Activated CD4-positive, alpha-beta T cell treated with anti-CD3 and anti-CD28 coated beads for 36 hours (primary cell): ENCODE measurements at regions of chr6 and their contacts with region 1.

Region 1: DNA sequence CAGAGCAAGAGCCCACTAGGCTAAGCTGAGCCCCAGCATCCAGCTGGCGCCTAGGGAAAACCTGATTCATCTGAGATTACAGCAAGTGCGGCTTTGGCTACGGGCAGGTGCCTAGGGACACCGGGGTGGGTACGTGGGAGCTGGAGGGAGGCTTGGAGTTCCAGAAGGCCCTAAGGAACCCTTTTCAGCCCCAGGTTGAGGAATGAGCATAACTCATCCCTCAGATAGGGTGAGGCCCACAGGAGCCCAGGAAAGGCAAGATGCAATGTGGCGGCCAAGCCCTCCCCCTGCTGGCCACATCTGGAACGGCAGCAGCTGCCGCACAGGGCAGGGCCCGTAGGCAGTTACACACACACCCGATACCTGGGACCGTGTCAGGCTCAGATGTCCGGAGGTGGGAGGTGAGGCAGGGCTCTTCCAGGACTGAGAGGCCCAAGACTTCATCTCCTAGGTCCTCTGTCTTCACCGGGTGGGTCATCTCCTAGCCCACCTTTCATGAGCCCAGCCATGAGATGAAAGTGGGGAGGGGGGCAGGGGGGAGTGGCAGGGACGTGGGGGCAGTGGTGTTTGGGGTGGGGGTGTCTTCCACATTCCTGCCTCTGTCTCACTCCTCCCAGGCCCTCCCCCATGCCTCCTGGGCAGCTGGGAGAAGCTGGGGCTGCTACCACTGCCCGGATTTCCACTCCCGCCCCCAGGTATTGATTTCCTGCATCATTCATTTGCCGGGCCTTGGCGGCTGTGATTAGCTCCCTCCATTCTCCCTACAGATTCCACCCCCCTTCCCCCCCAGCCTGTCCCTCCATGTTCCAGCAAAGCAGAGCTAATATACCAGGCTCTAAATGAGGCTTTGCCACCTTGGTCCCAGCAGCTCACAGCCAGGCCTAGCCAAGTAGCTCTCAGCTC is 5.5 kb downstream of the MDGA1 start:
- DNase-seq: peak; percentile 88
- ATAC-seq: peak; percentile 88
- H3K4me3 Mint-ChIP-seq: no peak overlapping the region
- H3K27ac Mint-ChIP-seq: no peak overlapping the region
- H3K4me1 Mint-ChIP-seq: peaks cover 23% of the 10 kb centered on the region
- H3K27me3 Mint-ChIP-seq: peaks cover 38% of the 10 kb centered on the region

Region 2: GRCh38 chr6:37324131-37325033 is 367.8 kb before region 1 on chr6:
- CTCF ChIA-PET with region 1: interaction called, 33 read pairs
- POLR2A ChIA-PET with region 1: no interaction called
- intact Hi-C with region 1: loop called (anchors 1 kb)
- DNase-seq: peak; percentile 62
- ATAC-seq: peak; percentile 91
- H3K4me3 Mint-ChIP-seq: no peak overlapping the region
- H3K27ac Mint-ChIP-seq: peak overlapping the region; percentile 39
- H3K4me1 Mint-ChIP-seq: peaks cover 23% of the 10 kb centered on the region
- H3K27me3 Mint-ChIP-seq: no peaks in the 10 kb centered on the region

Region 3: DNA sequence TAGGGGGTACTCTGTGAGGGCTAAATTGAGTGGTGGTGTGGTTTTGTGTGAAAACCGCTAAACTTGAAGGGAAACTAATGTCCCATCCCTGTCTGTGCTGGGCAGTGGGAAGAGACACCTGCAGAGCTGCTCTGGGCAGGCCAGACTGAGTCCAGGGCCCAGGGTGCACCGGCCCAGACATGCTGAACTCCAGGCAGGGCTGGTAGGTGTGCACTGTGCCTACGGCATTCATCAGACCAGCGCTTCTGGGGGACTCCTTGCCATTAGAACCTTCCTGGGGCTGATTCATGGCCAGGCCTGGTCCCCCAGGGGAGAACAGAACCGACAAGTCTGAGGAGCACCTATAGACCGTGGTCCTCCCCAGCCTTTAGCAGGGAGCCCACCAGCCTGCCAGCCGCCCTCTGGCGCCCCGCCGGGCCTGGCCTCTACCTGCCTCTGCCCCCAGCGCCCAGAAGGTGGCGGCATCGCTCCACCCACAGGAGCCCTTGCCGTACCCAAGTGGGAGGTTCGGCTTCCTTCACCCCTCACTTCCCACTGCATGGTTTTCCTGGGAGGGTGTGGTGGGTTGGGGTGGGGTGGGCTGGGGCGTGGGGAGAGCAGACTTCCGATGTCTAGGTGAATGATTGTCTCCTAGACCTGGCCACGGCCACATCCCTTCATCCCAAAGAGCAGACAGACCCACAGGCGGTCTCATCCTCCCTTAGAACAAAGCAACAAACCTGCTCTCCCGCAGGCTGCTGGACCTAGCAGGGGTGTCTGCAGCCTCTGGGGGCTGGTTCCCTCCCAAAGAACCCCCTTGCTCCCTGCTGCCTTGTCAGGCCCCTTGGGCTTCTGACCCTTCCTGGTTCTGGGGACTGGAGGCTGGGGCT is 208.0 kb before region 1 on chr6:
- CTCF ChIA-PET with region 1: interaction called, 9 read pairs
- POLR2A ChIA-PET with region 1: no interaction called
- intact Hi-C with region 1: loop called (anchors 1 kb)
- DNase-seq: peak; percentile 86
- ATAC-seq: peak; percentile 61
- H3K4me3 Mint-ChIP-seq: no peak overlapping the region
- H3K27ac Mint-ChIP-seq: no peak overlapping the region
- H3K4me1 Mint-ChIP-seq: peaks cover 15% of the 10 kb centered on the region
- H3K27me3 Mint-ChIP-seq: no peaks in the 10 kb centered on the region

Region 4: GRCh38 chr6:37653933-37654565 is 38.1 kb before region 1 on chr6:
- CTCF ChIA-PET with region 1: interaction called, 11 read pairs
- POLR2A ChIA-PET with region 1: no interaction called
- intact Hi-C with region 1: no loop called
- DNase-seq: peak; percentile 77
- ATAC-seq: peak; percentile 71
- H3K4me3 Mint-ChIP-seq: no peak overlapping the region
- H3K27ac Mint-ChIP-seq: no peak overlapping the region
- H3K4me1 Mint-ChIP-seq: peaks cover 11% of the 10 kb centered on the region
- H3K27me3 Mint-ChIP-seq: peaks cover 13% of the 10 kb centered on the region

Region 5: DNA sequence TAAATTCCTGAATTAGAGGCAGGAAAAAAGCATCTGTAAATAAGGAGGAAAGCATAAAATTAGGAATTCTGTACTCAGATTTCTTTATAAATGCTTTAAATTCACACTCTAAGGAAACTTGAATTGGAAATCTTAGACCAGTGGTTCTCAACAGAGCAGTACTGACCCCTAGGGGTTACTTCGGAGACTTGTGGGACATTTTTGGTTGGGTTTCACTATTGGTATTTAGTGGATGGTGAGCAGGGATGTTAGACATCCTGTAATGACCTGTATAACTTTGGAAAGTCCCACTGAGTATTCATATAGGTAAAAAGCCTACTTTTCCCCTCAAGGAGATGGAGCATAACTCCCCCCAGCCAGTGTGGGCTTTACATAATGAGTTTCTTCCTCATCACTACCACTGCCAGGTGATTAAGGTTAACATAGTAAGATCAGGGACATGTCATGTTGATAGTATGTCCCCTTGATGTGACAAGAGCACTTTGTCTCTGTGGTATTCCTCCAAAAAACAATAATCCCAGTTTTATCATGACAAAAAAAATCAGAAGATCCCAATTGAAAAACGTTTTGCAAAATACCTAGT is 979.8 kb after region 1 on chr6:
- CTCF ChIA-PET with region 1: no interaction called
- POLR2A ChIA-PET with region 1: no interaction called
- intact Hi-C with region 1: loop called in 1 of 2 experiments (anchors 10 kb)
- DNase-seq: peak; percentile 41
- ATAC-seq: peak; percentile 90
- H3K4me3 Mint-ChIP-seq: no peak overlapping the region
- H3K27ac Mint-ChIP-seq: no peak overlapping the region
- H3K4me1 Mint-ChIP-seq: peaks cover 27% of the 10 kb centered on the region
- H3K27me3 Mint-ChIP-seq: no peaks in the 10 kb centered on the region